Activated CD4-positive, alpha-beta T cell treated with anti-CD3 and anti-CD28 coated beads, Interleukin-2, amount 10 ng/mL, durations not matched to agents 24 days and 14 days (primary cell): ENCODE measurements at regions of chr10 and their contacts with region 1.

Region 1: GRCh38 chr10:26780793-26781601 is 79.8 kb downstream of the ABI1 start:
- DNase-seq: no peak
- H3K4me3 Mint-ChIP-seq: no peak overlapping the region
- H3K27ac Mint-ChIP-seq: peak overlapping the region; percentile 54
- H3K4me1 Mint-ChIP-seq: peaks cover 41% of the 10 kb centered on the region
- H3K27me3 Mint-ChIP-seq: no peaks in the 10 kb centered on the region

Region 2: GRCh38 chr10:26232174-26232573 is 548.8 kb before region 1 on chr10:
- intact Hi-C with region 1: no loop called
- DNase-seq: no peak
- H3K4me3 Mint-ChIP-seq: no peak overlapping the region
- H3K27ac Mint-ChIP-seq: no peak overlapping the region
- H3K4me1 Mint-ChIP-seq: no peaks in the 10 kb centered on the region
- H3K27me3 Mint-ChIP-seq: peaks cover 6% of the 10 kb centered on the region

Region 3: GRCh38 chr10:26737730-26738129 is 43.3 kb before region 1 on chr10:
- intact Hi-C with region 1: loop called (anchors 5 kb)
- DNase-seq: peak; percentile 83
- H3K4me3 Mint-ChIP-seq: peak overlapping the region; percentile 47
- H3K27ac Mint-ChIP-seq: peak overlapping the region; percentile 98
- H3K4me1 Mint-ChIP-seq: peaks cover 42% of the 10 kb centered on the region
- H3K27me3 Mint-ChIP-seq: no peaks in the 10 kb centered on the region

Region 4: GRCh38 chr10:26997610-26998009 is 216.6 kb after region 1 on chr10:
- intact Hi-C with region 1: no loop called
- DNase-seq: peak; percentile 67
- H3K4me3 Mint-ChIP-seq: no peak overlapping the region
- H3K27ac Mint-ChIP-seq: peak overlapping the region; percentile 62
- H3K4me1 Mint-ChIP-seq: peaks cover 14% of the 10 kb centered on the region
- H3K27me3 Mint-ChIP-seq: no peaks in the 10 kb centered on the region